Left ventricle myocardium inferior (tissue), 1 donor: ENCODE measurements at regions of chr15 and their contacts with region 1.

Region 1: GRCh38 chr15:47618241-47618640 is 99.1 kb upstream of the SEMA6D start:
- DNase-seq: no peak
- H3K4me3 ChIP-seq: no peak overlapping the region
- H3K27ac ChIP-seq: no peak overlapping the region
- H3K4me1 ChIP-seq: no peaks in the 10 kb centered on the region
- H3K27me3 ChIP-seq: peaks cover 13% of the 10 kb centered on the region
- CTCF ChIP-seq: no peak

Region 2: DNA sequence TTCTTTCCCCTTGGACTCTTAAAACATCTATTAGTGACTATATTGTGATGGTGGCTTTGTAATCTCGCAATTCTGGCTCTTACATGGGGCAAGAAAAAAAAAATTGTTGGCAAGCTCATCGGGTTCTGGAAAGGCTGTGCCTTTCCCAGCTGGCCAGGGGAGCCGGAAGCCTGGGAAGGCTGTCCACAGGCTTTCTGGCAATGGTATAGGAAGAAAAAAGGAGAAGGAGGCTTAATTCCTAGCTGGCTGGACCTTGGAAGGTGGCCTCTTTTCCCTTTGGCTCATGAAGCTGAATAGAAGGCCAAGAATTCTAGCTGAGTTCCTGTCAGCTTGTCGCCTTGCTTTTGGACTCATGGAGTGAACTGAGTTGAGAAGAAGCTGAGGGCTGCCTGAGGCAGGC is 144.4 kb before region 1 on chr15:
- intact Hi-C with region 1: loop called (anchors 10 kb)
- DNase-seq: peak; percentile 61
- H3K4me3 ChIP-seq: no peak overlapping the region
- H3K27ac ChIP-seq: peak overlapping the region; percentile 63
- H3K4me1 ChIP-seq: peaks cover 30% of the 10 kb centered on the region
- H3K27me3 ChIP-seq: no peaks in the 10 kb centered on the region
- CTCF ChIP-seq: no peak